ENCODE measurements at regions of chr16 and their contacts with region 1.

Region 1: DNA sequence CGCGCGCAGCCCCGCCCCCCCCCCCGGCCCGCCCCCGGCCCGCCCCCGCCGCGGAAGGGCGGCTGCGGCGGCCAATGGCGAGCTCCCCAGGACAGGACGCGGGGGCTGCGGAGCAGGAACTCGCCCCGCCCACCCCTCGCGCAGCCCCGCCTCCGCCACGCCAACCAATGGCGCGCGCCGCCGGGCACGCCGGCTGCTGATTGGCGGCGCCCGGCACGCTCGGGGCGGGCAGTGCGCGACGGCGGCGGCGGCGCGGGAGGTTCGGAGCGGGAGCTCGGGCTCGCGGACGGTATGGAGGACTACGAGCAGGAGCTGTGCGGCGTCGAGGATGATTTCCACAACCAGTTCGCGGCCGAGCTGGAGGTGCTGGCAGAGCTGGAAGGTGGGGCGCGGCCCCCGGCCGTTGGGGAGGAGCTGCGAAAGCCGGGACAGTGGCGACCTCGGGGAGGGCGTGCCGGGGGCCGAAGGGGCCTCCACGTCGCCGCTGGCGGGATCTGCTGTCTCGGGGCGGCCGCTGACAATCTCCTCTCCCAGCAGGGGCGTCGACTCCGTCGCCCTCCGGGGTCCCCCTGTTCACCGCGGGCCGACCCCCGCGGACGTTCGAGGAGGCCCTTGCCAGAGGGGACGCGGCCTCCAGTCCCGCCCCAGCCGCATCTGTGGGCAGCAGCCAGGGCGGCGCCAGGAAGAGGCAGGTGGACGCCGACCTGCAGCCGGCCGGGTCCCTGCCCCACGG is at the start of gene CHTF18:
- DNase-seq: peak; percentile 89 to 96 (median 95)
- H3K4me3 ChIP-seq: peak within 1 kb of the TSS; percentile 69 to 97 (median 84)
- H3K27ac ChIP-seq: peak within 1 kb of the TSS; percentile 46 to 80
- H3K4me1 ChIP-seq: peaks cover 0 to 27% (median 22%) of the 10 kb centered on the region in 4 experiments
- H3K27me3 ChIP-seq: no peaks in the 10 kb centered on the region

Region 2: GRCh38 chr16:714558-715476 is 73.7 kb before region 1 on chr16 and contains the start of gene METRN:
- CTCF ChIA-PET with region 1: interaction called, 104 read pairs
- POLR2A ChIA-PET with region 1: no interaction called
- DNase-seq: peak; percentile 81 to 87 (median 85)
- H3K4me3 ChIP-seq: peak within 1 kb of the TSS in 6 of 7 experiments; percentile 19 to 66 (median 60)
- H3K27ac ChIP-seq: no peak within 1 kb of the TSS
- H3K4me1 ChIP-seq: peaks cover 0 to 35% (median 31%) of the 10 kb centered on the region in 4 experiments
- H3K27me3 ChIP-seq: peaks cover 0 to 56% (median 9%) of the 10 kb centered on the region in 5 experiments

Region 3: DNA sequence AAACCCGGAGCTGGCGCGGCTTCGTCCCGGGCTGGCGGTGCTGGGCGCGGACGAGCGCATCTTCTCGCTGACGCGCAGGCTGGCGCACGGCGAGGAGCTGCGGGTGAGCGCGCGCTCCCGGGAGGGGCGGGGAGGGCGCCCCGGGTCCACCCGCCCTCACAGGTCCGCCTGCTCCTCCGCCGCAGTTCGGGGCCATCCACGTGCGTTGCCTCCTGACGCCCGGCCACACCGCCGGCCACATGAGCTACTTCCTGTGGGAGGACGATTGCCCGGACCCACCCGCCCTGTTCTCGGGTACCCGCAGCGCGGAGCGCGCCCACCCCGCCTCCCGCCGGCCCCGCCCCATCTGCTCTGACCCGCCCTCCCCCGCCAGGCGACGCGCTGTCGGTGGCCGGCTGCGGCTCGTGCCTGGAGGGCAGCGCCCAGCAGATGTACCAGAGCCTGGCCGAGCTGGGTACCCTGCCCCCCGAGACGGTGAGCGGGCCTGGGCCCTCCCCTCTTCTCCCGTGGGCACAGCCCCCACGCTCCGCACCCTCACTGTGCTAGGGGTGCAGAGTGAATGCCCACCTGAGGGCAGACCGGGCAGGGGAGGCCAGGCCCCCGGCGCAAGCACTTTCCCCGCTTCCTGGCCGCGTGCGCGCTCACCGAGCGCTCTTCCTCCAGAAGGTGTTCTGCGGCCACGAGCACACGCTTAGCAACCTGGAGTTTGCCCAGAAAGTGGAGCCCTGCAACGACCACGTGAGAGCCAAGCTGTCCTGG is 60.2 kb before region 1 on chr16:
- CTCF ChIA-PET with region 1: interaction called, 11 read pairs
- POLR2A ChIA-PET with region 1: no interaction called
- DNase-seq: peak in 2 of 3 donors; percentile 56 to 68
- H3K4me3 ChIP-seq: peak overlapping the region in 6 of 7 experiments; percentile 25 to 83 (median 48)
- H3K27ac ChIP-seq: no peak overlapping the region
- H3K4me1 ChIP-seq: peaks cover 0 to 24% (median 17%) of the 10 kb centered on the region in 4 experiments
- H3K27me3 ChIP-seq: peaks cover 0 to 10% (median 0%) of the 10 kb centered on the region in 5 experiments

Region 4: GRCh38 chr16:745739-746138 is 42.8 kb before region 1 on chr16:
- CTCF ChIA-PET with region 1: interaction called, 46 read pairs
- POLR2A ChIA-PET with region 1: no interaction called
- DNase-seq: peak; percentile 36 to 46 (median 44)
- H3K4me3 ChIP-seq: no peak overlapping the region
- H3K27ac ChIP-seq: no peak overlapping the region
- H3K4me1 ChIP-seq: peaks cover 0 to 6% (median 3%) of the 10 kb centered on the region in 4 experiments
- H3K27me3 ChIP-seq: no peaks in the 10 kb centered on the region

Region 5: GRCh38 chr16:754656-755055 is 33.9 kb before region 1 on chr16:
- CTCF ChIA-PET with region 1: interaction called, 12 read pairs
- POLR2A ChIA-PET with region 1: no interaction called
- DNase-seq: peak; percentile 49 to 90 (median 87)
- H3K4me3 ChIP-seq: peak overlapping the region in 4 of 7 experiments; percentile 26 to 58 (median 38)
- H3K27ac ChIP-seq: peak overlapping the region in 1 of 2 experiments; percentile 0
- H3K4me1 ChIP-seq: peaks cover 0 to 35% (median 24%) of the 10 kb centered on the region in 4 experiments
- H3K27me3 ChIP-seq: no peaks in the 10 kb centered on the region

Region 6: DNA sequence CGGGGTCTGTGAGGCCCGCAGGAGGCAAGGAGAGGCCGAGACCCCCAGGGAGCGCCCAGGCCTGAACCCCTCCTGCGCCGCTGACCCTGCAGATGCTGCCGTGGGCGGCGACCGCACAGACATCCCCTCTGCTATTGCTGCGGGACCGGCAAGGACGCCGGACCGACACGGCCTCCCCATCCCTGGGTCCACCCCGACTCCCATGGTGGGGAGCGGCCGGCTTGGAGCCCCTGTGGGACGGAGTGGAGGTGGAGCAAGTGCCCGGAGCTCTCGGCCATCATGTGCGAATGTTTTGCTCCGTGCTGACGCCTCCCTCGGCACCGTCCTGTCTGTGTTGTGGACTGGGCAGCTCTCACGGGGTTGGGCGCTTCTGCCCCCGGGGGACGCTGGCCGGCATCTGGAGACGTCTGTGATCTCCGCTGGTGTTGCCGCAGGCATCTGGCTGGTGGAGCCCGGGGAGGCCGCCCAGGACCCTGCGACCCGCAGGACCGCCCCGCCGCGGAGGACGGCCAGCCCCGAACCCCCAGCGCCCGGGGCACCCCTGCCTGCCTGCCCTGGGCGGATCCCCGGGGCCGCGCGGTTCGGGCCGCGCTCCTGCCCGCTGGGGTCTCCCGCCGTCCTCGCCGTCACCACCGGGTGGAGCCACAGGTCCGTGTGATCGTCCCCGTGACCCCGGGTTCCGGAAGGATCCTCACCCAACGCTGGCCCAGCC is 24.8 kb after region 1 on chr16:
- CTCF ChIA-PET with region 1: no interaction called
- POLR2A ChIA-PET with region 1: no interaction called
- DNase-seq: peak; percentile 36 to 57 (median 37)
- H3K4me3 ChIP-seq: no peak overlapping the region
- H3K27ac ChIP-seq: no peak overlapping the region
- H3K4me1 ChIP-seq: peaks cover 0 to 15% (median 6%) of the 10 kb centered on the region in 4 experiments
- H3K27me3 ChIP-seq: peaks cover 0 to 54% (median 13%) of the 10 kb centered on the region in 5 experiments

Region 7: GRCh38 chr16:914440-914839 is 125.9 kb after region 1 on chr16:
- CTCF ChIA-PET with region 1: no interaction called
- POLR2A ChIA-PET with region 1: no interaction called
- DNase-seq: peak in 2 of 3 donors; percentile 12 to 17
- H3K4me3 ChIP-seq: no peak overlapping the region
- H3K27ac ChIP-seq: no peak overlapping the region
- H3K4me1 ChIP-seq: no peaks in the 10 kb centered on the region
- H3K27me3 ChIP-seq: no peaks in the 10 kb centered on the region

Measured in common myeloid progenitor, CD34-positive (primary cell).